GM13977 (cell line): ENCODE measurements at regions of chr6 and their contacts with region 1.

Region 1: DNA sequence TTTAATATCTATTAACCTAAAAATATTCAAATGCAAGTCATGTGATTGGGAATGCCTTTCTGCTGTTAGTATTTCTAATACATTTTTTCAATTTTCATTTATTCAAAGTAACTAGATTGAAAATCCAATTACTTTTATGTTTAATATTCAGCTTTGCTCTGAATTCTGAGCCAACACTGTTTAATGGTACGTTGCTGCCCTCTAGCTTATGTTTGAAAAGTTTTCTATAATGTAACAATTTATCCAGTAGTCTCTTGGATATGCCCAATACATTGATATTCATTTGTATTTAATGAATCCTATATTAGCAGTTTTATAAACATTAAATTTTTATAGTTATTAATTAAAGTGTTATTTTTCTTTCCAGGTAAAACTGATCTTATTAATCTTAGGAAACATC is 47.4 kb downstream of the LGSN start:
- DNase-seq: peak; percentile 47
- CTCF ChIP-seq: peak; percentile 48

Region 2: DNA sequence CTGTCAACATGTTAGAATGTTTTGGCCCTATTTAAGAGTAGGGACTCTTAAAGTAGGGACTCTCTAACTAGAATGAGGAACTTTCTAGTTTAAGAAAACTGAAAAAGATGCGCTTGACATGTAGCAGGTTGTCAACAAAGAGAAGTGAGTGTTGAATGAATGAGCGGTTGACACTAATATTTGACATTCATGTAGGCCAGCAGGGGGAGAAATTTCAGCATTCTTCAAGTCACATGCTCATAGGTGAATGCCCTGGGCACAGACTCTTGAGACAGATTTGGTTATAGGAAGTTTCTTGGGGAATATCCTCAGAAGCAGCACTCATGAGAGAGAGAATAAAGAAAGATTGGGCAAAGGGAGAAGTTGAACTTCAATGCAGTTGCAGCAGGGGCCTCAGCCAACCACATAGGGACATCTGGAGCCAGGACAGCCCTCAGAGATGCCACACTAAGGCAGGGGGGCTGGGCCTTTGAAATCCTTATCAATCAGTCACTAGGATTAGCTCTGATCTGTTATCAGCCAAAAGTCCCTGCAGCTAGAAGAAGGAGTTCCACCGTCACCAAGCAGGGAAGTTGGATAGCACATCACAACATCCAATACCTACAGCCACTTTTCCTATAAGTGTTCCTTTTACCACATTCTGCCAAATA is 206.2 kb before region 1 on chr6:
- in situ Hi-C with region 1: loop called (anchors 25 kb)
- DNase-seq: peak; percentile 21
- CTCF ChIP-seq: peak; percentile 47

Region 3: DNA sequence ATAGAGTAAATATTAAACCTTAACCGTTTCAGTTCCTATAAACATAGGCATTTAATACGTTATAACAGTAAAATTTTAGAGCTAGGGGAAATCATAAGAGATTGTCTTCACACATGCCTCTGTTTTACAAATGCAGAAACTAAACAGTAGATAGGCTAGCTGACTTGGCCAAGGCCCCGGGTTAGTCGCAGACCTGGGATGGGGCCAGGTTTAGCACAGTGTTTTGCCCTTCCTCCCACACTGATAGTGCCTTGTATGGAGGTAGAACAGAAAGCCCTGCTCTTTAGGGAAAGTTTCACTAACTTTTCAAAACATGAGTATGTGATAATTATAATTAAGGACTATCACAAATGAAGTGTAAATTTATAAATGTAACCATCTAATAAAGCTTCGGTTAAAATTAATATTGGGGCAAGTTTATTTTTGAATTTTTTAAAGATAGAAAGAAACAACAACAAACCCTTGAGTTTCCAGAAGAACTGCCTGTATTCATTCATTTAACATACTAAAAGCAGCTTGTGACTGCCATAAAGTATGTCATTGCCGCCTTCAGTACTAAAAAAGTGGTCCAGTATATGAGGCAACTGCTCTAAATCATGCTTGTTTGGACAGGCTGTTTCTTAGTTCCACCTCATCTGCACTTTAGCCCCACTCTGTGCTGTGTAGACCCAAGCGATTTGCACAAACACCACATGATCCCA is 237.4 kb after region 1 on chr6:
- in situ Hi-C with region 1: no loop called
- DNase-seq: peak; percentile 13
- CTCF ChIP-seq: no peak

Region 4: DNA sequence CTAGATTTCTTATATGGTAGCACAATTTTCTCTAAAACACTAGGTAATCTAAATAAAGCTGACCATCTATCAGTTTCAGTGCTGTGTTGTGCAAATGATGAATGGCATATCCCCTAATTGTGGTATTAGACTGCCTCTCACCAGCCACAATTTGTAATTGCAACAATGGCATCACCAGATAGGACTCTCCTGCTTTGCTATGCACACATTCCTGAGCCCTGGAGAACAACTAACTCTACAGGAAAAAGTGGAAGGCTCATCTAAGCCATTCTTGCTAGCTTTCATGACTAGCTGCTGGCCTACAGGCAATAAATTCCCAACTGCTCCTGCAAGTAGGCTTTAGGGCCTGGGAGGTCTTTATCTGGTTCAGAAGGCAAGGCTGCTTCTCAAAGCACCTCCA is 1460.5 kb after region 1 on chr6:
- in situ Hi-C with region 1: no loop called
- DNase-seq: no peak
- CTCF ChIP-seq: no peak